ENCODE measurements at regions of chr7 and their contacts with region 1.

Region 1: GRCh38 chr7:2555121-2556052 is at the start of gene BRAT1:
- DNase-seq: peak; percentile 92
- ATAC-seq: peak; percentile 85
- H3K4me3 ChIP-seq: peak within 1 kb of the TSS; percentile 86
- H3K27ac ChIP-seq: peak within 1 kb of the TSS; percentile 96
- H3K4me1 ChIP-seq: peaks cover 27% of the 10 kb centered on the region
- H3K27me3 ChIP-seq: no peaks in the 10 kb centered on the region
- CTCF ChIP-seq: peak; percentile 42; the same call in 1 of the 2 replicates
- total RNA-seq, gene BRAT1: 65.2 and 76.3 TPM in 2 replicates

Region 2: GRCh38 chr7:2477447-2478398 is 77.7 kb before region 1 on chr7:
- CTCF ChIA-PET with region 1: no interaction called
- POLR2A ChIA-PET with region 1: no interaction called
- intact Hi-C with region 1: loop called (anchors 2 kb)
- DNase-seq: peak; percentile 68
- ATAC-seq: peak; percentile 94
- H3K4me3 ChIP-seq: no peak overlapping the region
- H3K27ac ChIP-seq: no peak overlapping the region
- H3K4me1 ChIP-seq: peaks cover 12% of the 10 kb centered on the region; the same call in 1 of the 2 replicates
- H3K27me3 ChIP-seq: no peaks in the 10 kb centered on the region
- CTCF ChIP-seq: peak; percentile 81

Region 3: DNA sequence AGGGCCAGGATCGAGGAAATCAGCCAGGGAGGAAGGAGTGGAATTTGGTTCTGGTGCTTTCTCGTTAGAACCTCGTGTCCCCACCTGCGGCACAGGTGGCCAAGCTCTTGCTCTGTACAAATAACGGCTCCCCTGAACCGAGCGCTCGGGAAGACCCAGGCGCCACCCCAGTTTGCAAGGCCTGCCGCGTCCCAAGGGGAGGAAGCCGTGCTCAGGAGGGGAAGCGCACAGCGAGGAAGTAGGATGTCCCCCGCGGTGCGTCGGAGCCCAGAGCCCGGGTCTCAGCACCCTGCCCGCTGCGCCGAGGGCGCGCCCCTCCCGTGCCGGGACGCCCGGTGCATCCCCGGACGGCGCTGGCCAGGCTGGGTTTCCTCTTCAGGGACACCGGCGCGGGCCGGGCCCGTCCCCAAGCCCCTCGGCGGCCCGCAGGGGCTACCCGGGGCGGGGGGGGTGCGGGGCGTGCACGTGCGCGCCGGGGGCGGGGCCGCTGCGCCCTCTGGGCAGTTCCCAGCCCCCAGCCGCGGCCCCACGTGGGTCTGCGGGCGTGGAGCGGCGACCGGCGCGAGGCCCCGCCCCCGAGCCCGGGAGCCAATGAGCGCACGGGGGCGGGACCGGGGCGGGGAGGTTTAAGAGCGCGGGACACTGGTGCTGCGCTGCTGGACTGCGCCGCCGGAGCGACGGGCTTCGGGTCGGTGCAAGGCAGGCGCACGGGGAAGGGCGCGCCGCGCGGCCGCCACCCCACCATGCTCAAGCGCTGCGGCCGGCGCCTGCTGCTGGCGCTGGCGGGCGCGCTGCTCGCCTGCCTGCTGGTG is 36.1 kb before region 1 on chr7 and contains the start of gene LFNG:
- CTCF ChIA-PET with region 1: interaction called, 3 read pairs
- POLR2A ChIA-PET with region 1: no interaction called
- intact Hi-C with region 1: loop called (anchors 2 kb)
- DNase-seq: peak; percentile 88
- ATAC-seq: peak; percentile 75
- H3K4me3 ChIP-seq: peak within 1 kb of the TSS; percentile 68
- H3K27ac ChIP-seq: no peak within 1 kb of the TSS
- H3K4me1 ChIP-seq: peaks cover 48% of the 10 kb centered on the region
- H3K27me3 ChIP-seq: no peaks in the 10 kb centered on the region
- CTCF ChIP-seq: no peak
- total RNA-seq, gene LFNG: 4.8 and 7.7 TPM in 2 replicates

Region 4: DNA sequence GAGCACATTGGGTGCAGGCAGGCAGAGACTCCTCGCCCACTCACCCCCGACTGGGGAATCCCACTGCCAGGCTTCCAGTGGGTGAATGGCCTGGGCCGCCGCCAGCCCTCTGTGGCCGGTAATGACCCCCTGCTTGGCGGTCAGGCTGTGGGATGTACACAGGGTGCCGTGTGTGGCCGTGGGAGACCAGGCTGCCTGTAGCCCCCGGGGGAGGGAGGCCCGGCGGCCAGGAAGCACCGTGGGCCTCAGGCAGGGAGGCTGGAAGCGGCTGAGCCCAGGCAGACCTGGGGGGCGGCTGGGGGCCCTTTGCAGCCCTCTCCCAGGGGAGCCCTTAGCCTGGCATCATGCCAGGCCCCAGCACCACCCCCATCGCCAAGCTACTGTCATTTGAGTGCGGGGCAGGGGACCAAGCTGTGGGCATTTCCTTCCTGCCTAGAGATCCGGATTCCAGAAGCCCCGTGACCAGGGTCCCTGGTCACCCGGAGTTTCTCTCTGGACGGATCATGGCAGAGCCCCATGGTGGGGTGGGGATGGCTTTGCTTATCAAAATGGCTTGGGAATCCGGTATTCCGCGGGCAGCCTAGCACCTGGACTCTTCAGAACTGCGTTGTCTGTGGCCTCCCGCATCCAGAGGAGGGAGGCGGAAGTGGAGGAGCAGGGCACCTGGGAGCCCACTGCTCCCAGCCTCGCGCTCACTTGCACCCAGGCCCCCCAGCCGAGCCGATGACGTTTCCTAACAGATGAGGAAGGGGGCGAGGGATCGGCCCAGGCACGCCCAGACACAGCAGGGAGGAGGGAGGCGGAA is 77.5 kb after region 1 on chr7:
- CTCF ChIA-PET with region 1: no interaction called
- POLR2A ChIA-PET with region 1: interaction called, 3 read pairs
- intact Hi-C with region 1: loop called (anchors 5 kb)
- DNase-seq: peak; percentile 36
- ATAC-seq: peak; percentile 45
- H3K4me3 ChIP-seq: peak overlapping the region; percentile 93
- H3K27ac ChIP-seq: peak overlapping the region; percentile 65
- H3K4me1 ChIP-seq: peaks cover 16% of the 10 kb centered on the region
- H3K27me3 ChIP-seq: no peaks in the 10 kb centered on the region
- CTCF ChIP-seq: no peak

Region 5: GRCh38 chr7:2680792-2681490 is 125.6 kb after region 1 on chr7:
- CTCF ChIA-PET with region 1: interaction called, 6 read pairs
- POLR2A ChIA-PET with region 1: no interaction called
- intact Hi-C with region 1: loop called (anchors 5 kb)
- DNase-seq: peak; percentile 79
- ATAC-seq: peak; percentile 88
- H3K4me3 ChIP-seq: no peak overlapping the region
- H3K27ac ChIP-seq: no peak overlapping the region
- H3K4me1 ChIP-seq: no peaks in the 10 kb centered on the region
- H3K27me3 ChIP-seq: no peaks in the 10 kb centered on the region
- CTCF ChIP-seq: peak; percentile 74

Measured in PC-3 (cell line).